ENCODE measurements at regions of chr11 and their contacts with region 1.

Region 1: DNA sequence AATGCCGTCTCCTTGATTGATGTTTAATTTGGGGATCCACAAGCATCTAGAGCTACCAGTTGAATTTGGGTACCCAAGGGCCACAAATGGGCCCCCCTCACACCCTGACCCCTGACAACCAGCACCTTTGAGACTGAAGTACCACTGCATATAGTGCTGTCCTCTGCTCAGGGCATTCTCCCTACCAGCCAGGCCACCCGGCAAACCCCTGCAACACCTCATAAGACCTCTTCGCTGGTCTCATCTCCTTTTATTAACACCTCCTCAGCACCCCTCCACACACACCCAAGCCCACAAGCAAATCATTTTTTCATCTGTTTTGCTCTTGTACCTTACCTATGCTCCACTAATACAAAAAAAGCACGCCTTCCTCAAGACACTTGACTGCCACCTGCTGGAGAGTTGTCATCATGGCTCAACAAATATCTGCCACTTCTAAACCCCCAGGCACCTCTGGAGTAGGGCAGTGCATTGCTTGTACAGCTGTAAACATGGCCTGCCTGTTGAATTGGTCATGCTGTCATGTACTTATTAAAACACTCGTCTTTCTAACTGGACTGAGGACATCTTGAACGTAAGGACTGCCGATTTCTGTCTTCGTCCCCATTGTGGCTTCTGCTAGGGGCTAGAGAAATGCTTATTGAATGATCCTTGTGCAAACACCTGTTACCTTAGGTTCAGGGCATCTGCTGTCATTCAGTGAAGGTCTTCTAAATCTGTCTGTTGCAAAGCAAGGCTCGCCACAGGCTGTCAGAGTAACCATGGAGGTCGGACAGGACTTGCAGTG is 66.5 kb downstream of the BMAL1 start:
- DNase-seq: peak; percentile 70
- ATAC-seq: peak in 1 of 2 donors; percentile 42

Region 2: GRCh38 chr11:13210424-13210823 is 133.7 kb before region 1 on chr11:
- intact Hi-C with region 1: loop called (anchors 1 to 5 kb)
- DNase-seq: peak; percentile 44
- ATAC-seq: peak; percentile 58 to 60

Measured in left cardiac atrium (tissue), 4 donors.